ENCODE measurements at regions of chr17 and their contacts with region 1.

Region 1: DNA sequence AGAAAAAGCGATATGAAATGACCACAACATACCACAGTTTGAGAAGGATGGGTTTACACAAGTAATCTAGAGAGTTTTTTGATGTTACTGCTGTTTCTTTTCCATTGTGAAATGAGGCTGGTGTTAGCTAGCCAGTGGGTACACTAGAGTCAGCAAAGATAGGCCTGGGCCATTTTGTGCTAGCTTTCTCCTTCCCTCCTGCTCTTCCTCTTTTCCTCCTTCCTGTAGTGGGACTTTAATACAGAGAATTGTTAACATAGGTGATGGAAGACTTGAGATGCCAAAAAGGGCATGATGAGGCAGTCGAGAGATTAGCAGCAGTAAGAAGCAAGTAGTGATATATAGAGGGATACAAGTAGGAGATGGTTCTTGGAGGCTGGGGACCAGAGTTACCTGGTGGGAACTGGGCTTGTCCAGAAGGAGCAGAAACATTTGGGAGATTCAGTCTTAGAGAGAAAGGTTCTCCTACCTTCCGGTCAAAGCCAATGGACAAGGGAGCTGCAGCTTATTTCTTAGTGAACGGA is 7.7 kb downstream of the NSRP1 start:
- DNase-seq: peak; percentile 52
- H3K4me3 Mint-ChIP-seq: no peak overlapping the region
- H3K27ac Mint-ChIP-seq: no peak overlapping the region
- H3K4me1 Mint-ChIP-seq: peaks cover 24% of the 10 kb centered on the region
- H3K27me3 Mint-ChIP-seq: no peaks in the 10 kb centered on the region

Region 2: GRCh38 chr17:30477083-30477773 is 352.9 kb after region 1 on chr17 and contains the start of gene GOSR1:
- intact Hi-C with region 1: loop called (anchors 10 kb)
- DNase-seq: peak; percentile 97
- H3K4me3 Mint-ChIP-seq: peak within 1 kb of the TSS; percentile 99
- H3K27ac Mint-ChIP-seq: peak within 1 kb of the TSS; percentile 94
- H3K4me1 Mint-ChIP-seq: peaks cover 29% of the 10 kb centered on the region
- H3K27me3 Mint-ChIP-seq: peaks cover 2% of the 10 kb centered on the region
- total RNA-seq, gene GOSR1: 54.8 and 55.6 TPM in 2 replicates